CD14-positive monocyte (primary cell): ENCODE measurements at regions of chr1 and their contacts with region 1.

Region 1: DNA sequence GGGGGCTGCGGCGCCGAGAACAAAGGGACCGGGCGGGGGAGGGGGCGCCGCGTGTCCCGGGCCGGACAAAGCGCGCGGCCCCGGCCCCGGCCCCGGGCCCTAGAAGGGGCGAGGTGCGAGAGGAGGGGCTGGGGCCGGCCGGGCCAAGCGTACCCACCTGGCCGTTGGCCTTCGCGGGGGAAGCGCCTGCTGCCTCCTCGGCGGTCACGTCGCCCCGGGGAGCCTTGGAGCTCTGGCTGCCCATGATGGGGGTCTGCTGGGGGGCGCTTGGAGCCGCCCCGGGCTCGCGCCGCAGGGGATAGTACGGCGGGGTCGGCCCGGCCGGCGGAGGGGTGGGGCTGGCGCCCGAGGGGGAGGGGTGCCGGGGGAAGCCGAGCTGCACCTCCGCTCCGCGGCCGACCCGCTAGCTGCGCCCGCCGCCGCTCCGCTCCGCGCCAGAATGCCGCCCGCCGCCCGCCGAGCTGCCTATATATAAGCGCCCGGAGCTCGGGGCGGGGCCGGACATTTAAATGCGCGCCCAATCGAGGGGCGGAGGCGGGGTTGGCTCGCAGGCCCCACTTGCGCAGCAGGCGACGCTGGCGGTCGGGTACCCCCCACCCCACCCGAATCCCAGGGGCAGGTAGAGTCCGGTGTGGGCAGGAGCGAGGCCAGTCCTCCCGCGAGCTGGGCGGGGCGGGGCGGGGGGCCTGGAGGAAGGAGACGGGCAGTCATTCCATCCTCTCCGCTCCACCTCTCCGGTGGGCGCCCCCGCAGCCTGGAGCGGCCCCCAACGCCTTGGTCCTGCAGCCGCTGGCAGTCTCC is at the start of gene MARCKSL1:
- DNase-seq: peak; percentile 63 to 70 (median 64)
- H3K4me3 ChIP-seq: peak within 1 kb of the TSS; percentile 23 to 76 (median 70)
- H3K4me3 Mint-ChIP-seq: peak within 1 kb of the TSS; percentile 86 to 93
- H3K27ac ChIP-seq: peak within 1 kb of the TSS; percentile 94 to 100
- H3K27ac Mint-ChIP-seq: peak within 1 kb of the TSS; percentile 95 to 99 (median 99)
- H3K4me1 ChIP-seq: peaks cover 51 to 66% of the 10 kb centered on the region in 2 donors
- H3K4me1 Mint-ChIP-seq: peaks cover 54% of the 10 kb centered on the region
- H3K27me3 ChIP-seq: peaks cover 7 to 15% of the 10 kb centered on the region in 2 donors
- H3K27me3 Mint-ChIP-seq: peaks cover 24 to 27% (median 24%) of the 10 kb centered on the region in 3 donors
- CTCF ChIP-seq: no peak
- polyA plus RNA-seq, gene MARCKSL1: 13.9 to 150 (median 40.3) TPM

Region 2: GRCh38 chr1:31938174-31938950 is 397.6 kb before region 1 on chr1 and contains the start of gene PTP4A2:
- intact Hi-C with region 1: loop called in 1 of 2 experiments (anchors 5 kb)
- DNase-seq: peak; percentile 94 to 95 (median 94)
- H3K4me3 ChIP-seq: peak within 1 kb of the TSS; percentile 71 to 97 (median 86)
- H3K4me3 Mint-ChIP-seq: peak within 1 kb of the TSS; percentile 98 to 99
- H3K27ac ChIP-seq: peak within 1 kb of the TSS; percentile 97
- H3K27ac Mint-ChIP-seq: peak within 1 kb of the TSS; percentile 91 to 99 (median 96)
- H3K4me1 ChIP-seq: peaks cover 80 to 88% of the 10 kb centered on the region in 2 donors
- H3K4me1 Mint-ChIP-seq: peaks cover 77% of the 10 kb centered on the region
- H3K27me3 ChIP-seq: no peaks in the 10 kb centered on the region
- H3K27me3 Mint-ChIP-seq: no peaks in the 10 kb centered on the region
- CTCF ChIP-seq: peak; percentile 61
- polyA plus RNA-seq, gene PTP4A2: 227 to 501 (median 294) TPM

Region 3: DNA sequence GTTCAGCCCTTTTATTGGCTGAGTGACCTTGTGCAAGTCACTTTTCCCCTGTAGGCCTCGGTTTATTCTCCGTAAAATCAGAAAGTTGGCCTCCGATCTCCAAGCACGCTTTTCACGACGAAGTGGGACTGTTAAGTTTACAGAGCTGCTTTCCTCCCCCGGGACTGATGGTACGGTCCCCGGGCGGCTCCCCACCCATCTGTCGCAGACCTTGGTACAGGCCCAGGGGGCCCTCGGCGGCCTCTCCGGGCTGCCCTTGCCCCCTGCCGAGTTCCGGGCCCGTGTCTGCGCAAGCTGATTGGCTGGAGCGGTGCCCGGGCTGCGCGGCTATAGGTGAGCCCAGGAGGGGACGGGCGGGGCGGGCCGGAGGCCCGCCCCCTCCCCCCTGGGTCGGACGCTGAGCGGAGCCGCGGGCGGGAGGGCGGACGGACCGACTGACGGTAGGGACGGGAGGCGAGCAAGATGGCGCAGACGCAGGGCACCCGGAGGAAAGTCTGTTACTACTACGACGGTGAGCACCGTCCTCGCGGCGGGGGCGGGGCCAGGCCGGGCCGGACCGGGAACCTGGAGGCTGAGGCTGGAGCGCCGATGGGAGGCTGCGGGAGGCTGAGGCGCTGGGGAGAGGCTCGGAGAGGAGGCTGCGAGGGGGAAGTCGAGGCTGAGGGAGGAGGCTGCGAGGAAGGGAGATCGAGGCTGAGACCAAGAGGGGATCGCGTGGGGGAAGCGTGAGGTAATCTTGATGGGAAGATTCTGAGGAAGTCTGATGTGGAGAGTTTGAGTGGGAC is 44.1 kb before region 1 on chr1 and contains the start of gene HDAC1:
- intact Hi-C with region 1: loop called in 1 of 2 experiments (anchors 2 kb)
- DNase-seq: peak; percentile 95 to 97 (median 96)
- H3K4me3 ChIP-seq: peak within 1 kb of the TSS; percentile 79 to 96 (median 91)
- H3K4me3 Mint-ChIP-seq: peak within 1 kb of the TSS; percentile 100
- H3K27ac ChIP-seq: peak within 1 kb of the TSS; percentile 52 to 88
- H3K27ac Mint-ChIP-seq: peak within 1 kb of the TSS; percentile 91 to 97 (median 96)
- H3K4me1 ChIP-seq: peaks cover 18 to 21% of the 10 kb centered on the region in 2 donors
- H3K4me1 Mint-ChIP-seq: peaks cover 40% of the 10 kb centered on the region
- H3K27me3 ChIP-seq: no peaks in the 10 kb centered on the region
- H3K27me3 Mint-ChIP-seq: peaks cover 0 to 5% (median 4%) of the 10 kb centered on the region in 3 donors
- CTCF ChIP-seq: no peak
- polyA plus RNA-seq, gene HDAC1: 73.8 to 95.0 (median 88.7) TPM

Region 4: DNA sequence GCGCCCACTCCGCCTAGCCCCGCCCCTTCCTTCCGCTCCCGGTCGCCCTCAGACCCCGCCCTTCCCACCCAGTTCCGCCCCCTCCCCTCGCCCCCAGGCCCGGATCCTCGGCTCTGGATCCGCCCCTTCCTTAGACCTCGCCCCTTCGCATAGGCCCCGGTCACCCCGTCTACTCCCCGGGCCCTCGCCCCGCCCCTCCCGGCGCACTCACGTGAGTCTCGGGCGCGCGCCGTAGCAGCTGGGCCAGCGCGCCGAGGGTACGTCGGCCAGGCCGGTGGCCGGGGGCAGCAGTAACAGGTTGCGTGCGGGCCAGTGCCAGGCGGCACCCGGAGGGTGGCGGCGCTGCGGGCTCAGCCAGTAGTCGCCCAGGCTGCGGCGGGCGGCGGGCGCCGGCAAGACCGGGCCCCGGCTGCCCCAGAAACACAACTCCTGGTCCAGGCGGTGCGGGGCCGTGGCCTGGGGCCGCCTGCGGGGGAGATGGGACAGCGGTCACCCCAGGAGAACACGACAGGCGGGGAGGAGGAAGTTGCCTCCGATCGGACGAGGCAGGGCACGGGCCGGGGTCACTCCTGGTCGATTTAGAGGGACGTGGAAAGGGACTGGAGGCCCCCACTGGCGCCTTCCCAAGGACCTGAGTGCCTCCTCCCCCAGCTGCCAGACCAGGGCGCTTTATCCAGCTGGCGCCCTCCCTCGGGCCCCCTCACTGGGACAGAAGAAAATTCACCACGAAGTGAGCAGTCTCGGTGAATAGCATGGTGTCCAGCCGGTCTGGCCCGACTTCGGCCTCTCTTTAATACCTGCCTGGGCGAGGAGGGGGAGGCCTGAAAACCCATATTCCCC is 15.6 kb after region 1 on chr1:
- intact Hi-C with region 1: loop called (anchors 1 to 2 kb)
- DNase-seq: peak; percentile 89 to 95 (median 92)
- H3K4me3 ChIP-seq: peak overlapping the region; percentile 36 to 74 (median 41)
- H3K4me3 Mint-ChIP-seq: peak overlapping the region; percentile 79 to 86
- H3K27ac ChIP-seq: peak overlapping the region; percentile 63 to 88
- H3K27ac Mint-ChIP-seq: peak overlapping the region; percentile 61 to 97 (median 91)
- H3K4me1 ChIP-seq: peaks cover 58 to 65% of the 10 kb centered on the region in 2 donors
- H3K4me1 Mint-ChIP-seq: peaks cover 62% of the 10 kb centered on the region
- H3K27me3 ChIP-seq: peaks cover 3 to 15% of the 10 kb centered on the region in 2 donors
- H3K27me3 Mint-ChIP-seq: peaks cover 30 to 34% (median 31%) of the 10 kb centered on the region in 3 donors
- CTCF ChIP-seq: peak; percentile 4

Region 5: DNA sequence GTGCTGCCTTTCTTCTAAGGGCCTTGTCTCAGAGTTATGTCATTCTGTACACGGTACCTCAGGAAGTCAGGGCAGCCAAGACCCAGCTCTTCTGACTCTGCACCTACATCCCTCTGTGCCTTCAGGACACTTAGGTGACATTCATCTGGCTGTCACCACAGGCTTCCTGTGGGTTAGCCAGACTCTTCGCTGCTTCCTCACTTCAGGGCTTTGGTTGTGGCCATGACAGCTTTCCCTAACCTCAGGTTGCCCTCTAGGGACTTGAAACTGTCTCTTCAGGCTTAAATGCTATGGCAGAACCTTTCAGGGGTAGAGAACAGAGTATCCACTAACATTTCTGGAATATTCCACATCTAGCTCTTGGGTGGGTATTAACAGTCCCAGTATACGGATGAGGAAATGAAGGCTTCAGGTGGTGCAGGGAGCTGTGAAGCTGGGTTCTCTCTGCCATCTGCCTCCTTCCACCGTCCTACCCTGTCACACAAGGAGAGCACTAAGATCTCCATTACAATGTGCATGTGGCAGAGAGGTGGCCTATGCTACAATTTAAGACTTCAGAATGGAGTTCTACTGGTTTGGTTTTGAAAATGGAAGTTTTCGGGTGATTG is 36.3 kb after region 1 on chr1:
- intact Hi-C with region 1: loop called (anchors 2 to 5 kb)
- DNase-seq: peak; percentile 44 to 62 (median 54)
- H3K4me3 ChIP-seq: no peak overlapping the region
- H3K4me3 Mint-ChIP-seq: no peak overlapping the region
- H3K27ac ChIP-seq: no peak overlapping the region
- H3K27ac Mint-ChIP-seq: peak overlapping the region in 2 of 7 donors; percentile 5 to 33
- H3K4me1 ChIP-seq: no peaks in the 10 kb centered on the region
- H3K4me1 Mint-ChIP-seq: peaks cover 3% of the 10 kb centered on the region
- H3K27me3 ChIP-seq: no peaks in the 10 kb centered on the region
- H3K27me3 Mint-ChIP-seq: peaks cover 0 to 3% (median 1%) of the 10 kb centered on the region in 3 donors
- CTCF ChIP-seq: peak; percentile 44

Region 6: GRCh38 chr1:32413507-32414185 is 77.7 kb after region 1 on chr1:
- intact Hi-C with region 1: loop called in 1 of 2 experiments (anchors 5 kb)
- DNase-seq: peak; percentile 54 to 78 (median 74)
- H3K4me3 ChIP-seq: no peak overlapping the region
- H3K4me3 Mint-ChIP-seq: no peak overlapping the region
- H3K27ac ChIP-seq: no peak overlapping the region
- H3K27ac Mint-ChIP-seq: peak overlapping the region in 1 of 7 donors; percentile 16
- H3K4me1 ChIP-seq: no peaks in the 10 kb centered on the region
- H3K4me1 Mint-ChIP-seq: no peaks in the 10 kb centered on the region
- H3K27me3 ChIP-seq: peaks cover 4 to 6% of the 10 kb centered on the region in 2 donors
- H3K27me3 Mint-ChIP-seq: peaks cover 2 to 15% (median 8%) of the 10 kb centered on the region in 3 donors
- CTCF ChIP-seq: peak; percentile 85

Region 7: DNA sequence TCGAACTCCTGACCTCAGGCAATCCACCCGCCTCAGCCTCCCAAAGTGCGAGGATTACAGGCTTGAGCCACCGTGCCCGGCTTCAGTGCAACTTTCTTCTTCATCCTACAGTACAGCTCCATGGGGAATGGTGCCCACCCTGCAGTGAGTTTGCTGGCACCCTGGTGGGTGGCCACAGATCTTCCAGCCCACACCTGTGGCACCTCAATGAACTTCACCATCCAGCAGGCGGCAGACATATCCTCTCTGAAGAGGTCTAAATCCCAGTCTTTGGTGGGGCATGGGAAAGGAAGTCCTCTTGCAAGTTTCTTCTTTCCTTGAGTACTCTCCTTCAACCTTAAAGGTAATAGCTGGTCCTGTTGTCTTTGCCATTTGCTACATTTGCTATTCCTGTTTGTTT is 185.2 kb after region 1 on chr1:
- intact Hi-C with region 1: no loop called
- DNase-seq: no peak
- H3K4me3 ChIP-seq: no peak overlapping the region
- H3K4me3 Mint-ChIP-seq: peak overlapping the region; percentile 10 to 75
- H3K27ac ChIP-seq: no peak overlapping the region
- H3K27ac Mint-ChIP-seq: no peak overlapping the region
- H3K4me1 ChIP-seq: peaks cover 4 to 5% of the 10 kb centered on the region in 2 donors
- H3K4me1 Mint-ChIP-seq: peaks cover 3% of the 10 kb centered on the region
- H3K27me3 ChIP-seq: no peaks in the 10 kb centered on the region
- H3K27me3 Mint-ChIP-seq: peaks cover 4 to 10% (median 10%) of the 10 kb centered on the region in 3 donors
- CTCF ChIP-seq: no peak